ENCODE measurements at regions of chr6 and their contacts with region 1.

Region 1: GRCh38 chr6:131460614-131461000 is 112.4 kb upstream of the ARG1 start:
- DNase-seq: no peak
- ATAC-seq: no peak
- H3K4me3 Mint-ChIP-seq: no peak overlapping the region
- H3K27ac Mint-ChIP-seq: no peak overlapping the region
- H3K4me1 Mint-ChIP-seq: peaks cover 5% of the 10 kb centered on the region
- H3K27me3 Mint-ChIP-seq: peaks cover 5% of the 10 kb centered on the region
- CTCF ChIP-seq: no peak

Region 2: DNA sequence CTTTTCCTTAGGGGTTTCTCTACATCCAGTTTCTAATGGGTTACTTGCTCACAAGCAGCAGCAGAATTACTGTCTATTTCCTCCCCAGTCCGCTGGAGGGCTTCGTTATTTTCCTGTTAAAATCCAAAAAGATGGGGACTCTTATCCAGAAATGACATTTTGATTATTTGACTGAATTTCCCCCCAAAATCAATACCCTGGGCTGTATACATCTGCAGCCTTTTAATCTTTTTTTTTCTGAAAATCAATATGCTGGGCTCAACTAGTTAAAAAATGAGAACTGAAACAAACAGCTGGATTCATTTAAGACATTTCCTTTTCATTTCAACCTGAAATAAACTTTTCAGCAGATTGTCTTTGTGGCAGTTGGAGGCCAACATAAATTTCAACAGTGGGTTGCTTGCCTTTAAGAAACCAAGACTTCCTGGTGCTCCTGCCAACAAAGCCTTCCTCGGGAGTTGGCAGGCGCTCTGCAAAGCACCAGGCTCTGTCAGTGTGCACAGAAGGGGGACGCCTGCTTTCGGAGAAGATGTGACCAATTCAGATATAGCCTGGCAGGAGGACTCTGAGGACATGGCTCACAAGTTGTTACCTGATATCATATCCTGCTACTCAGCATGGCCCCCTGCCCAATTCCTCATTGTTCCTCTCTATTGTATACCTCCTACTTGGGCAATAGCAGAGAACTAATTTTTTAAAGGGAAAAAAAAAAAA is 92.3 kb before region 1 on chr6:
- CTCF ChIA-PET with region 1: no interaction called
- POLR2A ChIA-PET with region 1: no interaction called
- intact Hi-C with region 1: loop called (anchors 1 kb)
- DNase-seq: peak; percentile 19
- ATAC-seq: peak; percentile 25
- H3K4me3 Mint-ChIP-seq: peak overlapping the region; percentile 72
- H3K27ac Mint-ChIP-seq: peak overlapping the region; percentile 85
- H3K4me1 Mint-ChIP-seq: peaks cover 45% of the 10 kb centered on the region
- H3K27me3 Mint-ChIP-seq: no peaks in the 10 kb centered on the region
- CTCF ChIP-seq: no peak

Measured in activated B cell treated with CpG ODN at 0.5 μM for 24 hours (primary cell).